ENCODE measurements at regions of chr18 and their contacts with region 1.

Region 1: GRCh38 chr18:21012308-21012707 is 99.3 kb downstream of the ROCK1 start:
- DNase-seq: no peak
- ATAC-seq: no peak
- H3K4me3 ChIP-seq: no peak overlapping the region
- H3K4me3 Mint-ChIP-seq: no peak overlapping the region
- H3K27ac ChIP-seq: no peak overlapping the region
- H3K27ac Mint-ChIP-seq: peak overlapping the region; percentile 33 to 52
- H3K4me1 ChIP-seq: no peaks in the 10 kb centered on the region
- H3K4me1 Mint-ChIP-seq: peaks cover 0 to 8% (median 7%) of the 10 kb centered on the region in 3 donors
- H3K27me3 ChIP-seq: no peaks in the 10 kb centered on the region
- H3K27me3 Mint-ChIP-seq: no peaks in the 10 kb centered on the region

Region 2: GRCh38 chr18:21031845-21032244 is 19.5 kb after region 1 on chr18:
- CTCF ChIA-PET with region 1: no interaction called
- POLR2A ChIA-PET with region 1: interaction called in 1 of 2 experiments, 10 read pairs
- DNase-seq: no peak
- ATAC-seq: no peak
- H3K4me3 ChIP-seq: no peak overlapping the region
- H3K4me3 Mint-ChIP-seq: peak overlapping the region in 1 of 3 donors; percentile 5
- H3K27ac ChIP-seq: no peak overlapping the region
- H3K27ac Mint-ChIP-seq: no peak overlapping the region
- H3K4me1 ChIP-seq: no peaks in the 10 kb centered on the region
- H3K4me1 Mint-ChIP-seq: peaks cover 17 to 28% (median 22%) of the 10 kb centered on the region in 3 donors
- H3K27me3 ChIP-seq: no peaks in the 10 kb centered on the region
- H3K27me3 Mint-ChIP-seq: no peaks in the 10 kb centered on the region

Region 3: GRCh38 chr18:21857871-21858270 is 845.6 kb after region 1 on chr18:
- CTCF ChIA-PET with region 1: no interaction called
- POLR2A ChIA-PET with region 1: no interaction called
- DNase-seq: no peak
- ATAC-seq: no peak
- H3K4me3 ChIP-seq: no peak overlapping the region
- H3K4me3 Mint-ChIP-seq: no peak overlapping the region
- H3K27ac ChIP-seq: no peak overlapping the region
- H3K27ac Mint-ChIP-seq: no peak overlapping the region
- H3K4me1 ChIP-seq: no peaks in the 10 kb centered on the region
- H3K4me1 Mint-ChIP-seq: peaks cover 0 to 1% (median under 1%) of the 10 kb centered on the region in 3 donors
- H3K27me3 ChIP-seq: no peaks in the 10 kb centered on the region
- H3K27me3 Mint-ChIP-seq: no peaks in the 10 kb centered on the region

Measured in T-cell (primary cell).